ENCODE measurements at regions of chr17 and their contacts with region 1.

Region 1: GRCh38 chr17:6473128-6473767 is 29.0 kb downstream of the PIMREG start:
- DNase-seq: peak; percentile 50
- ATAC-seq: peak; percentile 88
- H3K4me3 ChIP-seq: no peak overlapping the region
- H3K27ac ChIP-seq: no peak overlapping the region
- H3K4me1 ChIP-seq: no peaks in the 10 kb centered on the region
- H3K27me3 ChIP-seq: no peaks in the 10 kb centered on the region
- CTCF ChIP-seq: peak; percentile 95
- EP300 ChIP-seq: no peak
- POLR2A ChIP-seq: no peak
- RAD21 ChIP-seq: peak; percentile 77

Region 2: DNA sequence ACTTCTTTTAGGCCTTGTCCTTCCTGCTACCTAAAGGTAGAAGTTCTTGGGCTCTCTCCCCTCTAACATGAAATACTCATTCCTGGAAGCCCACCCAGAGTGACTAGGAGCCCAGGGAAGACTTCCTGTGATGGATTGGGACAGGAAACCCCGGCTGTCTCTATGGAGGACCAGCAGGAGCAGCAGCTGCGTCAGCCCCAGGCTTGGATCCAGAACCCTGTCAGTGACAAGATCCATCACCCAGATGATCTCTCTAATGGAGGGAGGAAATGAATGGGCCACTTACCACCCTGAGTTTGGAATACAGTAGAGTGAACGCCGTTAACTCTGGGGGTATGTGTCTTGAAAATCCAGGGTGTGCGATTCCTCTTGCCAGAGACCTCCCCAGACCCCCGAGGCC is 598.8 kb before region 1 on chr17:
- CTCF ChIA-PET with region 1: no interaction called
- POLR2A ChIA-PET with region 1: no interaction called
- in situ Hi-C with region 1: no loop called
- intact Hi-C with region 1: no loop called
- DNase-seq: no peak
- ATAC-seq: no peak
- H3K4me3 ChIP-seq: no peak overlapping the region
- H3K27ac ChIP-seq: no peak overlapping the region
- H3K4me1 ChIP-seq: peaks cover 8% of the 10 kb centered on the region; the same call in 1 of the 2 replicates
- H3K27me3 ChIP-seq: no peaks in the 10 kb centered on the region
- CTCF ChIP-seq: no peak
- EP300 ChIP-seq: no peak
- POLR2A ChIP-seq: no peak
- RAD21 ChIP-seq: no peak

Region 3: DNA sequence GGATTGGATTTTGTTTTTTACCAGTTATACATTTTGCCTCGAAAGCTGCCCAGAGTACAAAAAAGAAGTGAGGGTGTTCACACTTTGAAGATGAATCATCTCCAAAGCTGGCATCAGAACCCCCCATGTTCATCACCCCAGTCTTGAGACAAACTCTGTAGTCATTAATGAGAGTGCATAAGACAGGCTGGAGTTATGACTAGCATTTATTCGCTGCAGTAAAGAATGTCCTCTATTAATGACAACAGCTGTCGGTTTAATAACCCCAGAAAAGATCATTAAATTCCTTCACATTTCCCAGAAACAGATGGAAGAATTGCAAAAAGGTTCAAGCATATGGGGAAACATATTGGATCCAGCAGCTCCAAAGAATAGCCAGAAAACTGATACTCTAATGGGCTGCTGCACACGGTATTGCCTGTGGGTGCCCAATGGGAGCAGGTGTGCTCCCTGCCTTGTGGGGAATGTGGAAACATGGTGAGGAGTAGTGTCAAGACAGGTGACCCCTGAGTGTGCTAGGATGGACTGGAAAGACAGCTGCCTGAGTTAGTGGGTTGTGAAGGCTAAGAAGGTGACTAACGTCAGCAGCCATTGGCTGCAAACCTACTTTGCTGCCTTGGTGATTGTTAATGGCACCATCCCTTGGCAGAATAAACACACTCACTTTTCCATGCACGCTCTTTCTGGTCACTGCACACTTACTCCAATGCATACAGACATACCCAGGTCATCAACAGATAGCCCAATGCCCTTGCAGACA is 120.3 kb before region 1 on chr17:
- CTCF ChIA-PET with region 1: no interaction called
- POLR2A ChIA-PET with region 1: no interaction called
- in situ Hi-C with region 1: no loop called
- intact Hi-C with region 1: no loop called
- DNase-seq: no peak
- ATAC-seq: no peak
- H3K4me3 ChIP-seq: no peak overlapping the region
- H3K27ac ChIP-seq: no peak overlapping the region
- H3K4me1 ChIP-seq: no peaks in the 10 kb centered on the region
- H3K27me3 ChIP-seq: no peaks in the 10 kb centered on the region
- CTCF ChIP-seq: no peak
- EP300 ChIP-seq: no peak
- POLR2A ChIP-seq: no peak
- RAD21 ChIP-seq: no peak

Region 4: DNA sequence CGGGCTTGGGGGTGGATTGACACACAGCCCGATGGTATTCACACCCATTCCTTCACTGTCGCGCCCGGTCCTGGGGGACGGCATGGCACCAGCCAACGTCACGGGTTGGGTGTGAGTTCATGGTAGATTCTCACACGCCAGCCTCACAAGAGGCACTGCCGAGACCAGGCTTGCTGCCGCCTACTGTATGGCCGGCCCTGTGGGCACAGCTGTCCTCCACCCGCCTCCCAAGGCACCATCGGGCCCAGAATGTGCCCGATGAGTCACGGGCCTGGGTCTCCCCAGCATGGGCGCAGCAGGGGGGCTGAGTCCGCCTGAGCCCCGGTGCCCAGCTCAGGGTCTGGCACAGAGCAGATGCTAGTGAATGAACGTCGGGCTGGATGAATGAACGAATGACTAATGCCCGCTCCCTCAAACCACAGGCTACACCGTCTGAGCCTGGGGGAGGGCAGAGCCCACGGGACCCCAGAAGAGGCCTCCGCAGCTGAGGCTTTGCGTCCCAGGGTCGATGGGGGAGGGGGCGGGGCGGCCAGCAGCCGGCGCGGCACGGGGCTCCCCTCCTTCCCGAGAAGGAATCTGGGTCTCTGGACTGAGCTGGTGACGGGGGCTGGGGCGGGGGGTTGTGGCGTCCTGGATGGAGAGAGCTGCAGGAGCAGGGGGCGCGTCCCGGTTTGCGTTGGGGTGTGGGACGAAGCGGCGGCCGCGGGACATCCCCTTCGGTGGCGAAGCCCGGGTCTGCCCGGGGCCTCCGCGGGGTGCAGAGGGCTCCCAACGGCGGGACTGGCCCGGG is 82.3 kb after region 1 on chr17:
- CTCF ChIA-PET with region 1: no interaction called
- POLR2A ChIA-PET with region 1: no interaction called
- in situ Hi-C with region 1: no loop called
- intact Hi-C with region 1: loop called (anchors 10 kb)
- DNase-seq: no peak
- ATAC-seq: peak; percentile 10; the same call in 2 of the 3 replicates
- H3K4me3 ChIP-seq: peak overlapping the region; percentile 26 to 59 (median 44); a peak in 4 of 6 replicates
- H3K27ac ChIP-seq: no peak overlapping the region
- H3K4me1 ChIP-seq: peaks cover 18% of the 10 kb centered on the region; the same call in 1 of the 2 replicates
- H3K27me3 ChIP-seq: peaks cover 2 to 43% of the 10 kb centered on the region in 2 experiments
- CTCF ChIP-seq: no peak
- EP300 ChIP-seq: no peak
- POLR2A ChIP-seq: no peak
- RAD21 ChIP-seq: no peak

Region 5: GRCh38 chr17:6640536-6641373 is 167.5 kb after region 1 on chr17 and contains the starts of genes KIAA0753 and TXNDC17:
- CTCF ChIA-PET with region 1: no interaction called
- POLR2A ChIA-PET with region 1: no interaction called
- in situ Hi-C with region 1: loop called (anchors 5 kb)
- intact Hi-C with region 1: loop called (anchors 2 kb)
- DNase-seq: peak; percentile 79
- ATAC-seq: peak; percentile 89
- H3K4me3 ChIP-seq: peak within 1 kb of the TSS; percentile 77 to 85 (median 84)
- H3K27ac ChIP-seq: peak within 1 kb of the TSS; percentile 95
- H3K4me1 ChIP-seq: peaks cover 29% of the 10 kb centered on the region
- H3K27me3 ChIP-seq: no peaks in the 10 kb centered on the region
- CTCF ChIP-seq: no peak
- EP300 ChIP-seq: peak in 1 of 2 experiments; percentile 40; a peak in 1 of 4 replicates
- POLR2A ChIP-seq: peak; percentile 94 to 98
- RAD21 ChIP-seq: no peak
- total RNA-seq, gene KIAA0753: 9.1 and 10.7 TPM in 2 replicates
- total RNA-seq, gene TXNDC17: 266 and 359 TPM in 2 replicates